CD8-positive, alpha-beta memory T cell (primary cell): ENCODE measurements at regions of chr17 and their contacts with region 1.

Region 1: DNA sequence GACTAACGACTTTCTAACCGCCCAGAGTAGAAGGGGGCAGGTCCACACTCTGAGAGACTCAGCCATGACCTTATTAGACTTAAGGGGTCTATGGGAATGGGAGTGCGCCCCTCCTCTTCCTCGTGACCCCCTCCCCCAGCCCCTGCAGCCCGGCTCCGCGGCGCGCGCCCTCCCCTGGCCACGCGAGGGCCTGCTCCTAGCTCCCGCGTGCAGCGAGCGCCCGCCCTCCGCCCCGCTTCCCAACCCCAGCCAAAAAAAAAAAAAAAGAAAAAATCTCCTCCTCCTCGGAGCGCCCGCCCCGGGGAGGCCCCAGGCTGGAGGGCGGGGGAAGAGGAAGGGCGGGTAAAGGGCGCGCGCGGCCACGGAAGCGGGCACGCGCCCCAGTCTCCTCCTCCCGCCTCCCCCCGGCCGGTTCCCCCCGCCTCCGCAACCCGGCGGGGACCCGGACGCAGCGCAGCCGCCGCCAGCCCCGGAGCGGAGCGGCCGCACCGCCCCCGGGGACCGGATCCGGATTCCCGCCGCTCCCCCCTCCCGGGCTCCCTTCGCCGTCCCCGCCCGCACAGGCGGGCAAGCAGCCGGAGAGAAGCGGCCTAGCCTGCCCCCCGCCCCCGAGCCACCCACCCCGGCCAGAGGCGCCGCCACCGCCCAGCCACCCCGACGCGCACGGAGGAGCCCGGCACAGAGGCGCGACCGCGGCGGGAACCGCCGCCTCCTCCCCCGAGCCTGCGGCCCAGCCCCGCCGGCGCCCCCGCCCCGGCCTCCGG is 949 bp downstream of the UBTF start:
- DNase-seq: peak; percentile 81 to 93 (median 90)
- H3K4me3 ChIP-seq: peak overlapping the region; percentile 59
- H3K4me3 Mint-ChIP-seq: peak overlapping the region; percentile 76 to 89 (median 81)
- H3K27ac ChIP-seq: peak overlapping the region; percentile 81
- H3K27ac Mint-ChIP-seq: peak overlapping the region in 7 of 8 donors; percentile 77 to 97 (median 85)
- H3K4me1 ChIP-seq: peaks cover 55% of the 10 kb centered on the region
- H3K4me1 Mint-ChIP-seq: peaks cover 52 to 60% (median 53%) of the 10 kb centered on the region in 3 donors
- H3K27me3 ChIP-seq: no peaks in the 10 kb centered on the region
- H3K27me3 Mint-ChIP-seq: no peaks in the 10 kb centered on the region

Region 2: DNA sequence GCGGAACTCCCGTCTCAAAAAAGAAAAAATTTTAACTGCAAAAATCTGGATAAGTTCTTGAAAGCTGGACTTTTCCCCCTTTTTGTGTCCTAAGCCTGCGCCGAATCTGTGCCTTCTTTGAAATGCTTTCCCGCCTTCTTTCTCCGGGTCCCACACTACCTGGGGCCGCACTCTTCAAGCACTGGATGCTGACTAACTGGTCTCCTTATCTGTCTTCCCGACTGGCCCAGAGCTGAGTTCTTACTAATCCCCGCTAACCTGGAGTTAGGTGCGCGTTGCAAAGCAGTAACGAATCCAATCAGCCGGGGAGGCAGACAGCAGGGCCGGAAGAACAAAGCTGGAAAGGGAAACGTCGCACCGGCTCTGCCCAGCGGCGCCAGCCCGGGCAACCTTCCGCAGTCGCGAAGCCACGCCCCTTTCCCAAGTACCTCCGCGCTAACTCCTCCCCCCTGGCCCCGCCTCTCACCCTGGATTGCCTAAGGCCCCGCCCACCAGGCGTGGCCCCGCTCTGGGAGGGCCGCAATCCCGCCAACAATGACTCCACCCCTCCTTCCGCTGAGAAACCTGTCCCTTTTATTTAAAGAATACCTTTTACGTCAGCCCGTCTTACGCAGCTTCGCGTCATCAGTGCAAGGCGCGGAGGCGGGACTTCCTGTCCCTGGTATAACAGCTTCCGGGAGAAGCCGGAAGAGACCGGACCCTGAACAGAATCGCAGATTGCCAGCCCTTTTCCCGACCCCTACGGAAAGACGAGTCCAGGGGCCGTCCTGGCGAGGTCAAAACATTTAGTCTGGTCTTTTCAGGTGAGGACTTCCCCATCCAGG is 32.0 kb before region 1 on chr17 and contains the start of gene TMUB2:
- CTCF ChIA-PET with region 1: interaction called, 6 read pairs
- POLR2A ChIA-PET with region 1: interaction called, 50 read pairs
- DNase-seq: peak; percentile 99 to 100 (median 99)
- H3K4me3 ChIP-seq: peak within 1 kb of the TSS; percentile 100
- H3K4me3 Mint-ChIP-seq: peak within 1 kb of the TSS; percentile 90 to 100 (median 99)
- H3K27ac ChIP-seq: peak within 1 kb of the TSS; percentile 100
- H3K27ac Mint-ChIP-seq: peak within 1 kb of the TSS; percentile 89 to 100 (median 100)
- H3K4me1 ChIP-seq: peaks cover 35% of the 10 kb centered on the region
- H3K4me1 Mint-ChIP-seq: peaks cover 44 to 58% (median 56%) of the 10 kb centered on the region in 3 donors
- H3K27me3 ChIP-seq: no peaks in the 10 kb centered on the region
- H3K27me3 Mint-ChIP-seq: peaks cover 0 to 2% of the 10 kb centered on the region in 2 donors
- total RNA-seq, gene TMUB2: 20.8 to 22.5 TPM

Region 3: DNA sequence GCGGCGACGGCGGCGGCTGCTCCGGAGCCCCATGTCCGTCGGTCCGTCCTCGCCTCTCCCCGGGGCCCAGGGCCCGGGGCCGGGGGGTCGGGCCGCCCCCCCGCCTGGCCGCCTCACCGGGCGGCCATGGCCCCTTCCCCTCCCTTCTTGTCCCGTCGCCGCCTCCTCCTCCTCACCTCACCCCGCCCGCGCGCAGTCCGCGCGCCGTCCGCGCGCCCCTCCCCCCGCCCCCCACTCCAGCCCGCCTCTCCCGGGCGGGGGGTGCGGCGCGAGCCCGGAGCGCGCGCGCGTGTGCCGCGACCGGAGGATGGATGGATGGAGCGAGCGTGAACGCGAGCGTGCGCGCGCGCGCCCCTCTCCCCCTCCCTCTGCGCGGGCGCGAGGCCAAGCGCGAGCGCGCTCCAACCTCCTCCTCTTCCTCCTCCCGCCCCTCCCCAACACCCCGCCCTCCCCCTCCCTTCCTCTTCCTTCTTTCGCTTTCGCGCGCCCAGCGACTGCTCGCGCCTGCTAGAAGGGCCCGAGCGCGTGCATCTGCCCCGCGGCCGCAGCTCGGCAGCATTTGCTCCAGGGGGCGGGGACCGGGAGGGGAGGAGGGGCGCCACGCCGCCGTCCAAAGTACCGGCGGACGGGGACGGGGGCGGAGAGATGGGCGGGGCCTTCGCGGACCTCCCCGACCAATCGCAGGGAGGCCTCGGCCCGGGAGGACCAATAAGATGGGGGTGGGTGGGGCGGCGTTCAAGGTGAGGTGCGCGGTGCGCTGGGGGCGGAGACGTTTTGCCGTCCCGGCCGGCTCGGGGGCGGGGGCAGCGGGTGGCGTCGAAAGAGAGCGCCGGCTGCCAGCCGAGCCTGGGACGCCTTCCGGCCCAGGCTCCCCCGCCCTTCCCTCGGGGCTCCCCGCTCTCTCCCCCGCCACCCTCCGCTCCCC is 18.7 kb before region 1 on chr17 and contains the start of gene ATXN7L3:
- CTCF ChIA-PET with region 1: interaction called, 13 read pairs
- POLR2A ChIA-PET with region 1: interaction called, 54 read pairs
- DNase-seq: peak; percentile 96 to 100 (median 99)
- H3K4me3 ChIP-seq: peak within 1 kb of the TSS; percentile 84
- H3K4me3 Mint-ChIP-seq: peak within 1 kb of the TSS; percentile 87 to 96 (median 91)
- H3K27ac ChIP-seq: peak within 1 kb of the TSS; percentile 76
- H3K27ac Mint-ChIP-seq: peak within 1 kb of the TSS; percentile 86 to 98 (median 94)
- H3K4me1 ChIP-seq: peaks cover 30% of the 10 kb centered on the region
- H3K4me1 Mint-ChIP-seq: peaks cover 38 to 51% (median 41%) of the 10 kb centered on the region in 3 donors
- H3K27me3 ChIP-seq: no peaks in the 10 kb centered on the region
- H3K27me3 Mint-ChIP-seq: peaks cover 0 to 1% of the 10 kb centered on the region in 2 donors
- total RNA-seq, gene ATXN7L3: 96.6 to 111 TPM

Region 4: GRCh38 chr17:44247440-44247841 is 28.9 kb after region 1 on chr17:
- CTCF ChIA-PET with region 1: interaction called, 8 read pairs
- POLR2A ChIA-PET with region 1: interaction called, 20 read pairs
- DNase-seq: no peak
- H3K4me3 ChIP-seq: no peak overlapping the region
- H3K4me3 Mint-ChIP-seq: no peak overlapping the region
- H3K27ac ChIP-seq: peak overlapping the region; percentile 16
- H3K27ac Mint-ChIP-seq: peak overlapping the region in 7 of 8 donors; percentile 26 to 87 (median 79)
- H3K4me1 ChIP-seq: peaks cover 45% of the 10 kb centered on the region
- H3K4me1 Mint-ChIP-seq: peaks cover 38 to 52% (median 42%) of the 10 kb centered on the region in 3 donors
- H3K27me3 ChIP-seq: no peaks in the 10 kb centered on the region
- H3K27me3 Mint-ChIP-seq: no peaks in the 10 kb centered on the region

Region 5: GRCh38 chr17:44324571-44325275 is 106.2 kb after region 1 on chr17 and contains the start of gene SLC25A39:
- CTCF ChIA-PET with region 1: interaction called, 100 read pairs
- POLR2A ChIA-PET with region 1: interaction called, 30 read pairs
- DNase-seq: peak; percentile 92 to 96 (median 94)
- H3K4me3 ChIP-seq: peak within 1 kb of the TSS; percentile 94
- H3K4me3 Mint-ChIP-seq: peak within 1 kb of the TSS; percentile 91 to 98 (median 92)
- H3K27ac ChIP-seq: peak within 1 kb of the TSS; percentile 93
- H3K27ac Mint-ChIP-seq: peak within 1 kb of the TSS; percentile 92 to 99 (median 97)
- H3K4me1 ChIP-seq: peaks cover 21% of the 10 kb centered on the region
- H3K4me1 Mint-ChIP-seq: peaks cover 26 to 31% (median 30%) of the 10 kb centered on the region in 3 donors
- H3K27me3 ChIP-seq: no peaks in the 10 kb centered on the region
- H3K27me3 Mint-ChIP-seq: peaks cover 0 to 2% of the 10 kb centered on the region in 2 donors
- total RNA-seq, gene SLC25A39: 159 to 174 TPM

Region 6: GRCh38 chr17:44350733-44351226 is 132.3 kb after region 1 on chr17:
- CTCF ChIA-PET with region 1: interaction called, 7 read pairs
- POLR2A ChIA-PET with region 1: interaction called, 16 read pairs
- DNase-seq: peak; percentile 49 to 75 (median 60)
- H3K4me3 ChIP-seq: no peak overlapping the region
- H3K4me3 Mint-ChIP-seq: peak overlapping the region in 2 of 7 donors; percentile 32 to 45
- H3K27ac ChIP-seq: no peak overlapping the region
- H3K27ac Mint-ChIP-seq: no peak overlapping the region
- H3K4me1 ChIP-seq: peaks cover 11% of the 10 kb centered on the region
- H3K4me1 Mint-ChIP-seq: peaks cover 12 to 30% (median 17%) of the 10 kb centered on the region in 3 donors
- H3K27me3 ChIP-seq: no peaks in the 10 kb centered on the region
- H3K27me3 Mint-ChIP-seq: peaks cover 0 to 4% of the 10 kb centered on the region in 2 donors